ENCODE measurements at regions of chr18 and their contacts with region 1.

Region 1: GRCh38 chr18:11980555-11981382 is 538 bp upstream of the IMPA2 start:
- DNase-seq: peak; percentile 98
- ATAC-seq: peak; percentile 90 to 95

Region 2: DNA sequence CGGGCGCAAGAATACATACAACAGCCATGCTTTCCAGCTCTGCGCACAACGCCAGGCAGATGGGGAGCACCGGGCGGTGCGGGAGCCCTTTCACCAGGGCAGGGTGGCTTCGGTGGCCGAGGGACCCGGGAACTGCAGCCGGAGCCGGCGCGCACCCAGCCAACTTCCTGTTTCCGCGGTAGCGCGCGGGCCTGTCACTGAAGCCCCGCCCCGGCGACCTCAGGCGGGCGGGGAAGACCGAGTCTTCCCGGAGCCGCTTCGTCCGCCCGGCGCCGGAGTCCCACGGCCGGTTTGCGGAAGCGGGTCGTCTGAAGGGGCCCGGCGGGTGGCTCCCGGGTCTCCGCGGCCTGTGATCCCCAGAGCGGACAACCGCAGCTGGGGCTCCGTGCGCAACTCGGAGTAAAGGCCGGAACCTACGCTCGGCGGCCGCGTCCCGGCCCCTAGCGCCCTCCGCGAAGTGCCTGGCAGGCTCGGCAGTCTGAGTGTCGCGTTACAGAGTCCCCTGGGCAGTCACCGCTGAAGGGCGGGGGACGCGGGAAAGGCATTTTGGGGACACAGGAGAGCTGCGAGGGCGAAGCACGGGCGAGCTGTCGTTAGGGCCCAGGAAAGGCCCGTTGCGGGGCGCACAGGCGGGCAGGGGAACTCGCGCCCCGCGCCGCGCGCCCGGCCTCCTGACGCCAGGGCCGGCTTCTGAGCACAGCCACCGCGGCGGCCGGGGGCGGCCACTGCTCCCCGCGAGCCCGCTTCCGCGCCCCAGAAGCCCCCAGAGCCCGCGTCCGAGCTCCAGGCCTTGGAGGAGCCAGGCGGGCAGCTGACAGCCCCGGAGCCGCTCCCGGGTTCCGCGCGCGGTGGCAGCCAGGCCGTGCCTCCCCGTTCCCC is 72.3 kb before region 1 on chr18 and contains the start of gene MPPE1:
- intact Hi-C with region 1: loop called in 1 of 2 experiments (anchors 2 kb)
- DNase-seq: peak; percentile 93
- ATAC-seq: peak; percentile 95 to 97
- total RNA-seq, gene MPPE1: 26.5 to 30.0 TPM

Region 3: DNA sequence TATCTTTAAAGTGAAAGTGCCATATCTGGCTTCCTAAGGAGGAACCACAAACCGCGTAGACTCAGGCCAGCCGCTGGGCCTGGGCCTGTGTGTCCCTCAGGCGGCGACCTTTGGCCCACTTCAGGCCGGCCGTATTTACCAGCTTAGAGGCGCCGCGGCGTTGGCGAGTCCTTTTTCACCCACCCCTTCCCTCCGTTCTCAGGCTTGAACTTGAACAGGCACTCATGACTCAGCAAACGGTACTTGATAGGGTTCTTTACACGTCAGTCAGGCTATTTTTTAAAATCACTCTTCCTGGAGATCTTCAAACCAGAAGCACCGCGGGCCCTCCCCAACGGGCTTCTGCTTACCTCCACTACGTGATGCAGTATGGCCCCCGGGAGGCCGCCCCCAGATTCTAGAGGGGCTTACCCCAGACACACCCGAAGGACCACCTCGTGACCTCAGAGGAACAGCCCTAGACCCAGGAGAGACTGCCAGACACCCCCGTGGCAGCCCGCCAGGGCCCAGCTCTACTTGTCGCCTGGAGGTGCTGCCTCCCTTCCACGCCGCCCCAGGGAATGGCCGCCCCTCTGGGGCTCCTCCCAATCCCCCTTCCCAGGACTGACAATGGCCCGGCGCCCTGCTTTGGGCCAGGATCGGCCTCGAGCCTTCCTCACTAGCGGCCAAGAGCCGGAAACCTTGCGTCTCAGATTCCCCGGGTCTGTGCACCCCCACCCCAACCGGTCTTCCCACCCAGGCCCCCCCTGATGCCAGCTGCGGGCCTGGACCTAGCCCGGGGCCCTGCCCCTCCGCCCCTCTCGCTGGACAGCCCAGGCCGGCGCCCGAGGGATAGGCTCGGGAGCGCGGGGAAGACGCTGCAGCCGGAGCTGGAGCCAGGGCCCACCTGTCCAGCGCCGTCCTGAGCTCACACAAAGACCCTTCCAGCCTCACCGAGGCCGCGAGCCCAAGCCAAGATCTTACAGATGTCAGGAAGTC is 33.3 kb before region 1 on chr18:
- intact Hi-C with region 1: loop called in 1 of 2 experiments (anchors 2 kb)
- DNase-seq: peak; percentile 95
- ATAC-seq: peak; percentile 96 to 99

Region 4: GRCh38 chr18:12165038-12165768 is 184.4 kb after region 1 on chr18:
- intact Hi-C with region 1: no loop called
- DNase-seq: no peak
- ATAC-seq: no peak